Posterior cingulate gyrus (tissue), 11 donors: ENCODE measurements at regions of chr1 and their contacts with region 1.

Region 1: GRCh38 chr1:108512239-108512981 is 47.5 kb upstream of the EEIG2 start:
- DNase-seq: no peak

Region 2: GRCh38 chr1:108482708-108483107 is 29.7 kb before region 1 on chr1:
- intact Hi-C with region 1: no loop called
- DNase-seq: no peak

Region 3: DNA sequence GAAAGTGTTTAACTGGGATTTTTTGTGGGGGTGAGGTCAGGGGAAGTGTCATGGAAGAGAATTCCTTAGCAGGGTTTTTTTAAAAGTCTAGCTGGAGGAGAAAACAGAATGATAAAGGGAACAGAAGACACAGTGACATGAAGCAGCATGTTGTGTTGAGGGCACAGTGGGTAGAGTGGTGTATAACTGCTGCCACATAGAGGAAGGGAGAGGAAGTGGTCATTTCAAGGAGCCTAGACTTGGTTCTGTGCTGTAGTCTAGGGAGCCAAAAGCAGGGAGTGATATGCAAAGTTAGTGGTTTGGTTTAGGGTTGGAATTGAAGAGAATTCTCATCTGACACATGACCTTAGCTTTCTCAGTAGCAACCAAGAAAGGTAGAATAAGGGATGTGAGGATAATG is 57.7 kb after region 1 on chr1:
- intact Hi-C with region 1: loop called (anchors 5 kb)
- DNase-seq: no peak

Region 4: GRCh38 chr1:108643492-108644335 is 131.3 kb after region 1 on chr1:
- intact Hi-C with region 1: loop called (anchors 1 kb)
- DNase-seq: peak in 2 of 10 donors; percentile 27 to 36

Region 5: DNA sequence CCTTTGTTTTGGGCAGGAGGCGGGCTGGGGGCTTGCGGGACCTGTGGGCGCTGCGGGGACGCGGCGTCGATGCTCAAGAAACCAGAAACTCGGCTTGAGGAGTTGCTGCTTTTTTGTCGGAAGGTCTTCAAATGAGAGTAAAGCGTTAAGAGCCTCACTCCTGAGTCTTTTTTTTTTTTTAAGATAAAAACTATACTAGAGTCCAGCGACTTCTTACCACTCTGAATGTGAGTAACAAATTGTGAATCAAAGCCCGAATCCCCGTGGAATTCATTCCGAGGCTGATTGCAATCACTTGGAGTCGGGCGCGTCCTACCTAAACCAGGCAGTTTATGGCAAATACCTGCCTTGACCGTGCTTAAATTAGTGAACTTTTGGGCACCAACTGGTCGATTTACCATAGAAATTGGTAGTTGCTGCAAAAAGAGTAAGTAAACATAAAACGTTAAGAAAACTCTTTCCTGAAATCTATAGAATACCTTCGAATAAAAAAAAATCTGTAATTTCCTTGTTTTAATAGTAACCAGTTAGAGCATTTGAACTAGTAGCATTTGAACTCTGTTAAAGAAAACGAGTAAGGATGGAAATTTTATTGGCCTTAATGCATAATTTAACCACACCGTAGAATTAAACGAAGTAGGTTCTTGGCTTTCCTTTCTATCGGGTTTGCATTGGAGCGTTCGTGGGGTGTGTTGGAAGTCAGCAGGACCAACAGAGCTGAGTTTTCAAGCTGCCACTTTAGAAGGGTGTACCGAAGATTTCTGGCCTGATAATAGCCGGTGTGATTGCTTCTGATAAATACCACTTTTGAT is 365.1 kb after region 1 on chr1:
- intact Hi-C with region 1: loop called (anchors 10 kb)
- DNase-seq: peak in 2 of 10 donors; percentile 29 to 86